CD4-positive, alpha-beta T cell (primary cell): ENCODE measurements at regions of chr5 and their contacts with region 1.

Region 1: DNA sequence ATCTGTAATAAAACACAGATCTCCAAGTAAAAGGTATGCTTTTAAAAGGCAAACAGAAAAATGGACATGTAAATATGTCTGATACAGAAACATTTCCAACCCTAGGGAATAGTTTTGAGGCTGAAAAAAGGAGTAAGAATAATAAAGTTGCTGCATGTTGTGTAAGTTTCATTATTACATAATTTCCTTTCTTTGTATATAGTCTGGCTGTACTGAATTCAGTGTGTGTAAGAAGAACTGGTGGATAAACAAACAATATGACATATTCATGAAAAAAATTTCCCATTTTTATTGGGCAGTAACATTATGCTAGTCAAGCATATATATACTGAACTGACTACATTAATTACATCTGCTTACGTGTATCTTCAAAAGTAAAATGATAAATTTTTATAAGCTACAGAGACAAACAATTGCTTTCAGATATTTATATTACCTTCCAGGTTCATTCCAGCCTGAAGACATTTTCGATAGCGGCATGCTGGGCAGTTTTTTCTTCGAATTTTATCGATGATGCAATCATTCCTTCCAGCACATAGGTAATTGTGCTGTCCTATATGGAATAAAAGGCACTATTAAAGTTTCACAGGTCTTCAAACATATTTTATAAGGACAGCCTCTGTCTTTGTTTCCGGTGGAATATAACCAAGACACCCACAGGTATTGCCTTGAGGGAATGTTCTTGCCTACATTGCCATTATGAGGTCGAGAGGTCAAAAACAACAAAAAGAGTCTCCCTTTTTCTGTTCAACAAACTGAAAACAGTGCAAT is 93.6 kb downstream of the NR3C1 start:
- DNase-seq: no peak
- ATAC-seq: no peak
- H3K4me3 ChIP-seq: no peak overlapping the region
- H3K4me3 Mint-ChIP-seq: no peak overlapping the region
- H3K27ac ChIP-seq: no peak overlapping the region
- H3K27ac Mint-ChIP-seq: no peak overlapping the region
- H3K4me1 ChIP-seq: no peaks in the 10 kb centered on the region
- H3K4me1 Mint-ChIP-seq: peaks cover 31% of the 10 kb centered on the region
- H3K27me3 ChIP-seq: no peaks in the 10 kb centered on the region
- H3K27me3 Mint-ChIP-seq: no peaks in the 10 kb centered on the region
- CTCF ChIP-seq: no peak

Region 2: GRCh38 chr5:143200781-143201398 is 109.0 kb before region 1 on chr5:
- CTCF ChIA-PET with region 1: no interaction called
- POLR2A ChIA-PET with region 1: no interaction called
- intact Hi-C with region 1: no loop called
- DNase-seq: no peak
- ATAC-seq: no peak
- H3K4me3 ChIP-seq: no peak overlapping the region
- H3K4me3 Mint-ChIP-seq: no peak overlapping the region
- H3K27ac ChIP-seq: no peak overlapping the region
- H3K27ac Mint-ChIP-seq: no peak overlapping the region
- H3K4me1 ChIP-seq: no peaks in the 10 kb centered on the region
- H3K4me1 Mint-ChIP-seq: no peaks in the 10 kb centered on the region
- H3K27me3 ChIP-seq: no peaks in the 10 kb centered on the region
- H3K27me3 Mint-ChIP-seq: no peaks in the 10 kb centered on the region
- CTCF ChIP-seq: no peak

Region 3: GRCh38 chr5:143349177-143349576 is 39.3 kb after region 1 on chr5:
- CTCF ChIA-PET with region 1: interaction called, 4 read pairs
- POLR2A ChIA-PET with region 1: no interaction called
- intact Hi-C with region 1: loop called in 1 of 2 experiments (anchors 5 kb)
- DNase-seq: no peak
- ATAC-seq: no peak
- H3K4me3 ChIP-seq: no peak overlapping the region
- H3K4me3 Mint-ChIP-seq: no peak overlapping the region
- H3K27ac ChIP-seq: no peak overlapping the region
- H3K27ac Mint-ChIP-seq: no peak overlapping the region
- H3K4me1 ChIP-seq: peaks cover 12% of the 10 kb centered on the region
- H3K4me1 Mint-ChIP-seq: peaks cover 38% of the 10 kb centered on the region
- H3K27me3 ChIP-seq: no peaks in the 10 kb centered on the region
- H3K27me3 Mint-ChIP-seq: no peaks in the 10 kb centered on the region
- CTCF ChIP-seq: no peak